Heart right ventricle (tissue), 16 donors: ENCODE measurements at regions of chrX and their contacts with region 1.

Region 1: DNA sequence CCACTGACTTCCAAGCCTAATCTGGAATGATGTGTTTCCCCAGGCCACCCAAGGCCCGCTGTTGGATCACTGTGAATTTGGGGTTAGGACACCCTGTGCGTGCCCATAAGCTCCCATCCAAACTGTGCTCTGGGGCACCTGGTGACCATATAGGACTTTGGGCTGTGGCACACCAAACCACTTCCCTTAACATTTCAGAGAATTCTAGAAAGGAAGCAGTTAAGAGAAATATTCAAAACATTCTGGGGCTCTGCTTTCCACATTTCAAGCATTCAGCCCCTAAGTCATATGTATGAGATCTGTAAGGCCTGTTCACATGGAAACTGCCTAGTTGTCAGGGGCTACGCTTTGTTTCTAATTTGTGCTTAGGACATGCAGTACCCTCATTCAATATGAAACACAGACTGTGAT is 14.4 kb downstream of the VGLL1 start:
- DNase-seq: no peak
- ATAC-seq: no peak
- H3K4me3 ChIP-seq: no peak overlapping the region
- H3K27ac ChIP-seq: no peak overlapping the region
- H3K4me1 ChIP-seq: no peaks in the 10 kb centered on the region
- H3K27me3 ChIP-seq: peaks cover 0 to 26% (median 0%) of the 10 kb centered on the region in 7 donors
- CTCF ChIP-seq: no peak

Region 2: DNA sequence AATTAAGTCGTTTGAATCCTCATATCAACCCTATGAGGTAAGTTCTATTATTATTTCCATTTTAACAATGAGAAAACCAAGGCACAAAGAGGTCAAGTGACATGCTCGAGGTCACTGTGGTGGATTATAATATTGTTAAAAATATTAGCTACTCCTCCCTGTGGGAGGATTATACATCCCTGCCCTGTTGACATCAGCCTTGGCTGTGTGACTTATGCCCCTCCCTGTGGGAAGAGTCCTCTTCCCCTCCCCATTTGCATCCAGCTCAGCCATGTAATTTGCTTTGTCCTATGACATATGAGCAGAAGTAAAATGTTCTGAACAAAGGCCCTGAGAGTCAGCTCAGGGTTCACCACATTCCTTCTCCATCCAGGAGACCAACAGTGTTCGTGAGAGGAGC is 866.8 kb after region 1 on chrX:
- intact Hi-C with region 1: loop called in 1 of 10 experiments (anchors 5 kb)
- DNase-seq: no peak
- ATAC-seq: no peak
- H3K4me3 ChIP-seq: no peak overlapping the region
- H3K27ac ChIP-seq: no peak overlapping the region
- H3K4me1 ChIP-seq: no peaks in the 10 kb centered on the region
- H3K27me3 ChIP-seq: peaks cover 0 to 37% (median 0%) of the 10 kb centered on the region in 7 donors
- CTCF ChIP-seq: no peak